BJ (cell line): ENCODE measurements at regions of chr11 and their contacts with region 1.

Region 1: DNA sequence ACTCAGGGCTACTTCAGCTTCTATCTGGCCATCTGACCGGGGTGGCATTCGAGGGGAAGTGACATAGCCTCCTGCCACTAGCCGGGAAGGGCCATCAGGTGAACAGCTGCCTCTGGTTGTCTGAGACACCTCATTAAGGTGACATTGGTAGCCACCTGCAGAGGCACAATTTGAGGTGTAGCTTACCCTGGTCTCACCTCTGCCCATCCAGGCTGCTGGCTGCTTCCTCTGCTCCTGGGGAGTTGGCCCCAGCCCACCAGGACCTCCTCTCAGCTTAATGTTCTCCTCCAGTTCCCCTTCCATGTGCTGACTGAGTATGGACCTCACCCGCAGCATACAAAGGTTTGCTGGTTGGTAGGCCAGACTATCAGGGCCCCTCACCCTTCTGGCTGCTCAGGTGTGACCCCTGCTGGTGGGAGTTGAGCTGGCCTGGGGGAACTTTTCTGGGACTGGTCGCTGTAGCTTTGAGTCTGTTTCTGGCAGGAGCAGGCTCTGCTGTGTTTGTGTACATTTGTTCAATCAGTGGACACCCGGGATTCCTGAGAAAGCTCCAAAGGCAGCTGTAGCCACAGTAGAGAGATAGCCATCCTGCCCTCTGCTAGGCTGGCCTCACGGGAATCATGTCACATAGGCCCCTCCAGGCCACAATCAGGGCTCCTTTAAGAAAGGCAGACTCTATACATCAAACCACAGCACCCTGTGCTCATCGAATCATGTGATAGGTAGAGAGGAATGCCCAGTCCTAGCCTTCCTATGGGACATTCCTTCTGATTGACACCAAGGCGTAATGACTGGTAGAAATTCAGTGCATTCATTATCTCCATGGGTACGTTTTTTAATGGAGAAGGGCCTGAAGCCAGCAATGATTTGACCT is 295.1 kb upstream of the PLET1 start:
- DNase-seq: no peak
- H3K4me3 ChIP-seq: no peak overlapping the region
- H3K27me3 ChIP-seq: no peaks in the 10 kb centered on the region
- CTCF ChIP-seq: peak; percentile 84

Region 2: DNA sequence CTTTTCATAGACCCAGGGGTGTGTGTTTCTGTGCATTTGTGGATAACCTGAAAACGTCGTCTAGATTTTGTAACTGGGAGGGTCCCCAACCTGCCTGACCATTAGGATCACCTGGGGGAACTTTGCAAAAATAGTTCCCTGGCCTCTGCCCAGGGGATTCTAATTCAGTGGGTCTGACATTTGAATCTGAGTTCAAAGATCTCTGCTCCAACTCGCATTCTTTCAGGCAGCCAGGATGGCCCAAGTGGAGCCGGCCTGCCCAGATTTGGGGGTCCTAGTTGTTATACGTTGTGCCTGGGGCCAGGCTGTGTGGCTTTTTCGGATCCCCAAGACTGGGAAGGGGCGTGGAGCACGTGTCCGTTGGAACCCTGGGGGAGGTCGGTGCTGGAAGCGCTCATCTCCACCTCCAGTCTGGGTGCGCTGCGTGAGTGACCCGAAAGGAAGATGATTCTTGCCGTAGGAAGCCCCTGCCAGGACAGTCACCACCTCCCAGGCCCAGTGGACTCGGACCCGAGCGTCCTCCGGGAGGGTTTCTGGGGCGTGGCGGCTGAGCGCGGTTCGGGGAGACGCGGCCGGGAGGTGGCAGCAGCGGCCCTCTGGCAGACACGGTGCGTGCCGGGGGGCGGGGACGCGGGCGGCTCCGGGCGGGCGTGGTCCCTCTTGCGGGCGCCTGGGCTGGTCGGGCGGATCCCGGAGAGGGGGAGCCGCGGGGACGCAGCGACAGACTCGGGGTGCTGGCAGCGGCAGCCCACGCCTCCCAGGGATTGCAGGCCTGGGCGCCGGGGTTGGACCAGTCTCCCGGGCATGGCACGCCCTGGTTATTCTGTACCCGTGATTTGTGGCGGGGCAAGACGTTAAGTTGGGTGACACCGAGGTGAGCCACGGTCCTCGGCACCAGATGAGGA is 265.9 kb before region 1 on chr11:
- CTCF ChIA-PET with region 1: interaction called, 11 read pairs
- POLR2A ChIA-PET with region 1: no interaction called
- DNase-seq: no peak
- H3K4me3 ChIP-seq: peak overlapping the region; percentile 65
- H3K27me3 ChIP-seq: no peaks in the 10 kb centered on the region; the same call in 1 of the 2 replicates
- CTCF ChIP-seq: peak; percentile 67

Region 3: GRCh38 chr11:112499221-112500204 is 56.2 kb before region 1 on chr11:
- CTCF ChIA-PET with region 1: no interaction called
- POLR2A ChIA-PET with region 1: no interaction called
- DNase-seq: no peak
- H3K4me3 ChIP-seq: no peak overlapping the region
- H3K27me3 ChIP-seq: no peaks in the 10 kb centered on the region
- CTCF ChIP-seq: no peak